CD8-positive, alpha-beta T cell (primary cell): ENCODE measurements at regions of chr3 and their contacts with region 1.

Region 1: DNA sequence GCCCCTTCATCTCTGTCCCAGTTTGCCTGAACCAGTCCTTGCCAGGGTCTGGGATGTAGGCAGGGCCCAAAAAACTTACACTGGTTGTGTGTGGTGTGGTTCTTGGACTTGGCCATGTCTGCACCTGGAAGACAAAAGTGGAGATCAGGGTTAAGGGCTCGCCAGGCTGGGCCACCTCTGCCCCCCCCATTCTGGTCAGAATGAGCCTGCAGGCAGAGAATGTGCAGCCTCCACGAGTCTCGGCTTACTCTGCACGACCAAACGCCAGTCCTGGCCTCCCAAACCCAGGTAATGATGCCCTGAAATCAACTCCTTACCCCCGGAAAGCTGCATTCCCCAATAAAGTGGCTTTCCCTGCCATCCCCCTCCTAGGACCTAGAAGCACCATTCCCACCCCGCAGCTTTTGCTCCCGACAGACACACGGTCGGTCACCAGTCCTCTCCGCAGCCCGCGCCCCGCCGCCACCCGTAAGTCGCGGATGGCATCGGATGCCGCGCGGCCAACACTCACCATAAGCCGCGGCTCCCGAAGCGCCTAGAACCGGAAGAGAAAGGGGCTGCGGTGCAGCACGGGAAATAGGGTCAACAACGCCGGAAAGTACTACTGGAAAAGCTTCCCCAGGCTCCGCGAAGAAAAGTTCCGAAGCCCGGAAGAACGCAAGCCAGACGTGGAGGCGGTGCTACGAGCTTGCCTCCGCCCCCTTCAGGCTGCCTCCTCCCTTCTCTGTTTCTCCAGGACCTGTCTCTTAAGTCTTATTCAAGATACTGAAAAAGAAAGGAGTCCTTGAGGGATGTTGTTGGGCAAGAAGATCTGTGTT is at the start of gene RPL29:
- DNase-seq: peak; percentile 85 to 97 (median 91)
- ATAC-seq: peak; percentile 98
- H3K4me3 ChIP-seq: peak within 1 kb of the TSS; percentile 82 to 93
- H3K4me3 Mint-ChIP-seq: peak within 1 kb of the TSS; percentile 100
- H3K27ac ChIP-seq: peak within 1 kb of the TSS; percentile 86 to 92
- H3K27ac Mint-ChIP-seq: peak within 1 kb of the TSS; percentile 100
- H3K4me1 ChIP-seq: peaks cover 14% of the 10 kb centered on the region
- H3K4me1 Mint-ChIP-seq: peaks cover 35% of the 10 kb centered on the region
- H3K27me3 ChIP-seq: no peaks in the 10 kb centered on the region
- H3K27me3 Mint-ChIP-seq: no peaks in the 10 kb centered on the region
- CTCF ChIP-seq: no peak
- total RNA-seq, gene RPL29: 1,694 to 1,736 TPM

Region 2: GRCh38 chr3:51836606-51837005 is 158.9 kb before region 1 on chr3:
- CTCF ChIA-PET with region 1: no interaction called
- POLR2A ChIA-PET with region 1: no interaction called
- intact Hi-C with region 1: no loop called
- DNase-seq: no peak
- ATAC-seq: no peak
- H3K4me3 ChIP-seq: no peak overlapping the region
- H3K4me3 Mint-ChIP-seq: no peak overlapping the region
- H3K27ac ChIP-seq: no peak overlapping the region
- H3K27ac Mint-ChIP-seq: no peak overlapping the region
- H3K4me1 ChIP-seq: no peaks in the 10 kb centered on the region
- H3K4me1 Mint-ChIP-seq: no peaks in the 10 kb centered on the region
- H3K27me3 ChIP-seq: peaks cover 0 to 3% of the 10 kb centered on the region in 2 experiments
- H3K27me3 Mint-ChIP-seq: peaks cover 32% of the 10 kb centered on the region
- CTCF ChIP-seq: no peak

Region 3: DNA sequence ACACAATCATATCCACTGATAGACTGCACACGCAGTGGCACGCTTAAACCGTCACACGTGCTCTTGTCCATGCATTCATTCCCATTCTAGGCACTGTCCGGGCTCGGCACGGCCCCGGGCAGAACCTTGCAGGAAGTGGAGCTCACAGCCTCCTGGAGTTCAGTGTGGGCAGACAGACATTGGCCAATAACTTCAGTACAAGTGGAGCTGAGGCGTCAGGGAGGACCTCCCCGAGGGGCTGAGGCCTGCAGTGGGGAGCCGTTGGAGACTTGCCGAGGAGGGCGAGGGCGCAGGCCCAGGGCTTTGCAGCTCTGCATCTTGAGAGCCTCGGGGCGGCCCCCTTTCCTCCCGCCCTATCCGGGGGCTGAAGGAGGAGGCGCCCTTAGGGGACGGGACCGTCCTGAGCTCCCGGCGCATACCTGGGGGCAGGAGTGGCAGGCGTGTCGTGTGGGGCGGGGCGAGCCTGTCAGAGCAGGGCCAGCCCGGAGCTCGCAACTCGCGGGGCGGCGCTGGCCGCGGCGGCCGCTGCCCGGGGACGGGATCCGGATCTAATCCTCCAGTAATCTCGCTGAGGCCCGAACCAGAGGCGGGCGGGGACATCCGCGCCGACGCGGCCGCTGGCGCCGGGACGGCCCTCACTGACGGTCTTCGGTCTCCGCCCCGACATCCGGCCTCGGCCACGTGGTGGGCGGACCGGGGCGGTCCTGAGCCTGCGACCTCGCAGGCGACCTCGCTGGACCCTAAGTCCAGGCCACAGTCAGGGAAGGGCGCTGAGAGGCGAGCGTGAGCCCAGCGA is 12.6 kb before region 1 on chr3 and contains the start of gene ACY1:
- CTCF ChIA-PET with region 1: interaction called, 10 read pairs
- POLR2A ChIA-PET with region 1: interaction called, 28 read pairs
- intact Hi-C with region 1: loop called (anchors 1 kb)
- DNase-seq: peak; percentile 26 to 82 (median 70)
- ATAC-seq: peak; percentile 89
- H3K4me3 ChIP-seq: peak within 1 kb of the TSS; percentile 51 to 68
- H3K4me3 Mint-ChIP-seq: peak within 1 kb of the TSS; percentile 94
- H3K27ac ChIP-seq: peak within 1 kb of the TSS; percentile 52 to 92
- H3K27ac Mint-ChIP-seq: peak within 1 kb of the TSS; percentile 86
- H3K4me1 ChIP-seq: peaks cover 10% of the 10 kb centered on the region
- H3K4me1 Mint-ChIP-seq: peaks cover 21% of the 10 kb centered on the region
- H3K27me3 ChIP-seq: no peaks in the 10 kb centered on the region
- H3K27me3 Mint-ChIP-seq: no peaks in the 10 kb centered on the region
- CTCF ChIP-seq: no peak
- total RNA-seq, gene ACY1: 3.8 to 4.0 TPM

Region 4: DNA sequence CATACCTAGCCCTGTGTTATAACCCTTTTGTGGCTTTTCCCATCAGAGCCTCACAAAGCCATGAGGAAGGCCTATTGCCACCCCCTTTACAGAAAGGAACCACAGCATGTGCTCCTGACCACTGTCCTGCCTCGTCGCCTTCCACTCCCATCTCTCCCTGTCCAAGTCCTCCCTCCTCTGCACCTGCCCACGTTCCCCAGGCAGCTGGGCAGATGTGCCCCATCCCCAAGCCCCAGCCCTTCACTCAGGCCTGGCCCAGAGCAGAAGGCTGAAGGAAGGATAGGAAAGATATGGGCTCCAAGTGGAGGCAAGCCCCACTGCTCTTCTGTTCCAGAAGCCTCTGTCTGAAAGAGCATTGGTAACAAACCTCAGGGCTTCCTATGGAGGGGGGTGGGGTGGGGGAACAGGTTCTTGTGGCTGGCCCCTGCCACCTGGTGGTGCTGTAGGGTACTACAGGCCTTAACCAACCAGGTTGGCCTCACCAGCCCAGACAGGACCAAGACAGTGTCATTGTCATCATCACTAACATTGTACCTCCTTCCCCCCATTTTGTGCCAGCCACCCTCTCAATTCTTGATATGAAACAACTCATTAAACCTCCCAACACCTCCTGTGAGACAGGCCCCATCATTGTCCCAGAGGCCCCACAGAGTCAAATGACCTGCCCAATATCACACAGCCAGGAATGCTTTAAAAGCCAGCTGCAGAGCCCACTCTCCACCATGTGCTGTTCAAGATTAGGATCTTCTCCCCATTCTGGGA is 148.7 kb after region 1 on chr3:
- CTCF ChIA-PET with region 1: interaction called, 186 read pairs
- POLR2A ChIA-PET with region 1: no interaction called
- intact Hi-C with region 1: no loop called
- DNase-seq: peak; percentile 74 to 92 (median 90)
- ATAC-seq: peak; percentile 100
- H3K4me3 ChIP-seq: no peak overlapping the region
- H3K4me3 Mint-ChIP-seq: no peak overlapping the region
- H3K27ac ChIP-seq: no peak overlapping the region
- H3K27ac Mint-ChIP-seq: peak overlapping the region; percentile 27
- H3K4me1 ChIP-seq: peaks cover 7% of the 10 kb centered on the region
- H3K4me1 Mint-ChIP-seq: peaks cover 7% of the 10 kb centered on the region
- H3K27me3 ChIP-seq: no peaks in the 10 kb centered on the region
- H3K27me3 Mint-ChIP-seq: no peaks in the 10 kb centered on the region
- CTCF ChIP-seq: peak; percentile 92

Region 5: DNA sequence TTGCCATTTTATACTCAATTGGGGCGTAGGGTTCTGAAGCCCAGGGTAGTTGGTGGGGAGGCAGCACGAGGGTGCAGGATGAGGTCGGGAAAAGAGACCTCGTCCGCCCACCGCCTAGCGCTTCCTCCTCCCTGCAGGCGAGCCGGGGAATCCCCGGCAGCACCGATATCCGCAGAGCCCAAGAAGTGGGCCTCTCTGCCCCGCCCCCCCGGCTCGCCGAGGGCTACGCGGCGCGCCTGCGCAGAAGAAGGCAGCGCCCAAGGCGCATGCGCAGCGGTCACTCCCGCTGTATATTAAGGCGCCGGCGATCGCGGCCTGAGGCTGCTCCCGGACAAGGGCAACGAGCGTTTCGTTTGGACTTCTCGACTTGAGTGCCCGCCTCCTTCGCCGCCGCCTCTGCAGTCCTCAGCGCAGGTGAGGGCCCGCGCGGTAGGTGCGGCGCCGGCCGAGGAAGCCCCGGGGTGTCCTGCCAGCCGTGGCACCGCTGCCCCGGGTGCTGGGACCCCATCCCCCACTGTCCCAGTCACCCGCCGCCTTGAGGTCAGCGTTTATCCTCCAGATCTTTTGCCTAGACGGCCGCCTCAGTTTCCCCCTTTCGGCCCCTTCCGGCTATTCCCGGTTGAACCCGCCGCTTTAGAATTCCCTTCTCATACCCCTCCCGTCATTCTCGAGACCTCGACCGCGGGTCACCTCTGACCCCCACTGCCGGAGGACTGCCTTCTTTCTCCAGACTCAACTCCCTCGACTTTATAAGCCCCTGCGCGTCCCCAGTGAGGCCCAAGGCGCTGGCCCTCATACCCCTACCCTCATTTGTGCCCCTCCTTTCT is 202.5 kb after region 1 on chr3 and contains the start of gene ALAS1:
- CTCF ChIA-PET with region 1: no interaction called
- POLR2A ChIA-PET with region 1: no interaction called
- intact Hi-C with region 1: loop called in 1 of 2 experiments (anchors 1 kb)
- DNase-seq: peak; percentile 86 to 98 (median 95)
- ATAC-seq: peak; percentile 98
- H3K4me3 ChIP-seq: peak within 1 kb of the TSS; percentile 88 to 93
- H3K4me3 Mint-ChIP-seq: peak within 1 kb of the TSS; percentile 96
- H3K27ac ChIP-seq: peak within 1 kb of the TSS; percentile 69 to 86
- H3K27ac Mint-ChIP-seq: peak within 1 kb of the TSS; percentile 94
- H3K4me1 ChIP-seq: peaks cover 32% of the 10 kb centered on the region
- H3K4me1 Mint-ChIP-seq: peaks cover 41% of the 10 kb centered on the region
- H3K27me3 ChIP-seq: no peaks in the 10 kb centered on the region
- H3K27me3 Mint-ChIP-seq: no peaks in the 10 kb centered on the region
- CTCF ChIP-seq: no peak
- total RNA-seq, gene ALAS1: 6.0 to 6.6 TPM

Region 6: GRCh38 chr3:52444860-52445793 is 449.6 kb after region 1 on chr3 and contains the start of gene SEMA3G:
- CTCF ChIA-PET with region 1: interaction called, 4 read pairs
- POLR2A ChIA-PET with region 1: no interaction called
- intact Hi-C with region 1: loop called in 1 of 2 experiments (anchors 5 kb)
- DNase-seq: peak; percentile 46 to 80 (median 71)
- ATAC-seq: peak; percentile 95
- H3K4me3 ChIP-seq: no peak within 1 kb of the TSS
- H3K4me3 Mint-ChIP-seq: no peak within 1 kb of the TSS
- H3K27ac ChIP-seq: no peak within 1 kb of the TSS
- H3K27ac Mint-ChIP-seq: no peak within 1 kb of the TSS
- H3K4me1 ChIP-seq: peaks cover 16% of the 10 kb centered on the region
- H3K4me1 Mint-ChIP-seq: peaks cover 7% of the 10 kb centered on the region
- H3K27me3 ChIP-seq: no peaks in the 10 kb centered on the region
- H3K27me3 Mint-ChIP-seq: no peaks in the 10 kb centered on the region
- CTCF ChIP-seq: peak; percentile 51
- total RNA-seq, gene SEMA3G: 0.05 TPM in 1 of 2 experiments, not detected in the other